Activated CD8-positive, alpha-beta T cell treated with anti-CD3 and anti-CD28 coated beads for 36 hours (primary cell): ENCODE measurements at regions of chr16 and their contacts with region 1.

Region 1: DNA sequence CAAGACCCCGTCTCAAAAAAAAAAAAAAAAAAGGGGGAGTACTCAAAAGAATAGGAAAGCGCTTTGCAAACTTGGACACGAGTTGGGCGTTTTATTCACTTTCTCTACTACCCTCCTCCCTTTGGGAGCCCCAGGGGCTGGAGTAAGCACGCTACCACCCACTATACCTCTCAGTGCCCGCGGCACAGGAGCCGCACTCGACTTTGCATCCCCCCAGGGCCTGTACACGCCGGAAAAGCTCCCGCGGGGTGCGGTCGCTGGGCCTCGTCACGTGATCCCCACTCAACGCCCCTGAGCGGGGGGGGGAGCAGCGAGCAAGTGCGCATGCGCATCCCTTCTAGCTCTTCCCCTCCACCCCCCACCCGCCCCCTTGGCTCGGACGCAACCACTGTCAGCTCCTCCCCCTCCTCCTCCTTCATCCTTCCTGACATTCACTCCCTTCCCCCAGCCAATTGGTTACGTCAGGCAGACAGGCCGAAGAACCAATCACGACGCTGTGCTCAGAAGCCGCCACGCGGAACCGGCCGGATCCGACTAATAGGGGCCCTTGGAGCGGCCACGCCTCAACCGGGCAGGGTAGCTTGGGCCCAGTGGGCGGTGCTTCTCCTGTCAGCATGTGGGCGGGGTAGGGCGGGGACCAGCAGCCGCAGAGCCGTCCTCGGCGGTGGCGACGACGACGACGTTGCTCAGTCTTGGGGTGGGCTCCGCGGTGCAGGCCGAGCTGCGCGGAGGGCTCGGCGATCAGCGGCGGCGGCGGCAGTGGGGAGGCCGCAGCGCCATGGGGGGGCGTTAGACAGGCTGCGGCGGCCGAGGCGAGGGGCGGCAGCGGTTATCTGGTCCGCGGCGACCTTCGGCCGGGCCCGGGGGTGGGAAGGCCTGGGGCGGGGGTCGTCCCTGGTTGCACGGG is at the start of gene HAPSTR1:
- DNase-seq: peak; percentile 100
- ATAC-seq: peak; percentile 91
- H3K4me3 Mint-ChIP-seq: peak within 1 kb of the TSS; percentile 88
- H3K27ac Mint-ChIP-seq: peak within 1 kb of the TSS; percentile 98
- H3K4me1 Mint-ChIP-seq: peaks cover 26% of the 10 kb centered on the region
- H3K27me3 Mint-ChIP-seq: no peaks in the 10 kb centered on the region
- CTCF ChIP-seq: no peak
- total RNA-seq, gene HAPSTR1: 52.5 to 53.4 TPM

Region 2: GRCh38 chr16:8868416-8869211 is 222.6 kb before region 1 on chr16 and contains the start of gene CARHSP1:
- CTCF ChIA-PET with region 1: no interaction called
- POLR2A ChIA-PET with region 1: interaction called, 15 read pairs
- intact Hi-C with region 1: no loop called
- DNase-seq: peak; percentile 87
- ATAC-seq: peak; percentile 79
- H3K4me3 Mint-ChIP-seq: peak within 1 kb of the TSS; percentile 93
- H3K27ac Mint-ChIP-seq: peak within 1 kb of the TSS; percentile 94
- H3K4me1 Mint-ChIP-seq: peaks cover 47% of the 10 kb centered on the region
- H3K27me3 Mint-ChIP-seq: no peaks in the 10 kb centered on the region
- CTCF ChIP-seq: no peak
- total RNA-seq, gene CARHSP1: 63.9 to 72.6 TPM

Region 3: GRCh38 chr16:8963825-8964441 is 127.3 kb before region 1 on chr16 and contains the start of gene USP7:
- CTCF ChIA-PET with region 1: interaction called, 3 read pairs
- POLR2A ChIA-PET with region 1: interaction called, 7 read pairs
- intact Hi-C with region 1: loop called (anchors 5 kb)
- DNase-seq: peak; percentile 94
- ATAC-seq: peak; percentile 92
- H3K4me3 Mint-ChIP-seq: peak within 1 kb of the TSS; percentile 83
- H3K27ac Mint-ChIP-seq: peak within 1 kb of the TSS; percentile 77
- H3K4me1 Mint-ChIP-seq: peaks cover 28% of the 10 kb centered on the region
- H3K27me3 Mint-ChIP-seq: no peaks in the 10 kb centered on the region
- CTCF ChIP-seq: no peak
- total RNA-seq, gene USP7: 155 to 163 TPM

Region 4: DNA sequence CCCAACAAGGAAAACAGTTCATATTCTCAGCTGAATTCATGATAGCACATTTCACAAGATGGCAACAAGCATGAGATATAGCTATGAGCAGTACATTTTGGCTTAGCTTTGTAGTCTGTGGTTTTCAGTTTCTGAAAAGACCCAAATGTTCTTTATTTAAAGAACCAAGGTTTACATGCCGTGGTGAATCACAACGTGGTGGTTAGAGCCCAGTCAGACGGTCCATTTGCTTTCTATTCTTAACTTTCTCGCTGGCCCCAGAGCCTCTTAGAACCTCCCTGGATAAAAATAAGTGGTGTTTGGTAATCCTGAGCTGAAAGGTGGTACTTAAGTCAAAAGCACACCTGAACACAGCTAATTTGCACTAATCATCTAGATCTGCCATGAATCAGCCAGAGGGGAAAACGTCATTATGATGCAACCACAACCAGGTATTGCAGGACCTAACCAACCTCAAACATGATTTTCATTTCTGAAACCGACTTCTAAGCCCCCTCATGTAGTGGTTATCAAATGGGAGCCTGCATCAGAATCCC is 18.3 kb before region 1 on chr16:
- CTCF ChIA-PET with region 1: interaction called, 6 read pairs
- POLR2A ChIA-PET with region 1: interaction called, 78 read pairs
- intact Hi-C with region 1: loop called (anchors 2 kb)
- DNase-seq: peak; percentile 74
- ATAC-seq: peak; percentile 62
- H3K4me3 Mint-ChIP-seq: peak overlapping the region; percentile 57
- H3K27ac Mint-ChIP-seq: peak overlapping the region; percentile 98
- H3K4me1 Mint-ChIP-seq: peaks cover 54% of the 10 kb centered on the region
- H3K27me3 Mint-ChIP-seq: peaks cover 2% of the 10 kb centered on the region
- CTCF ChIP-seq: no peak

Region 5: GRCh38 chr16:9123871-9124270 is 32.7 kb after region 1 on chr16:
- CTCF ChIA-PET with region 1: interaction called, 3 read pairs
- POLR2A ChIA-PET with region 1: interaction called, 26 read pairs
- intact Hi-C with region 1: loop called (anchors 5 kb)
- DNase-seq: peak; percentile 41
- ATAC-seq: no peak
- H3K4me3 Mint-ChIP-seq: no peak overlapping the region
- H3K27ac Mint-ChIP-seq: peak overlapping the region; percentile 66
- H3K4me1 Mint-ChIP-seq: peaks cover 79% of the 10 kb centered on the region
- H3K27me3 Mint-ChIP-seq: no peaks in the 10 kb centered on the region
- CTCF ChIP-seq: no peak

Region 6: DNA sequence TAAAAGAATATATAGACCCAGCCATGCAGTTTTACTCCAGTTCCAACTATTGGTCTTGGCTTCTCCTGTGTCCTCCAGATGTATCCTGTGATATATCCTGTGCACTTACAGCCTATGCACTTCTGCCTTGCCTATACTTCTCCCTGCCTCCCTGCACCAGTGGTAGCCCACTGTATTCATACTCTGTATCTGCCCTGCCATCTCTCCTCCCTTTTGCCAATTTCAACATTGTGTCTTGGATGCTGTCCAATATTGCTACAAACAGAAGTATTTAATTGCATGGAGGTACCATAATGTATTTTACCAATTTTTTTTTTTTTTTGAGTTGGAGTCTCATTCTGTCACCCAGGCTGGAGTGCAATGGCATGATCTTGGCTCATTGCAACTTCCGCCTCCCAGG is 242.9 kb after region 1 on chr16:
- CTCF ChIA-PET with region 1: no interaction called
- POLR2A ChIA-PET with region 1: no interaction called
- intact Hi-C with region 1: no loop called
- DNase-seq: no peak
- ATAC-seq: no peak
- H3K4me3 Mint-ChIP-seq: no peak overlapping the region
- H3K27ac Mint-ChIP-seq: no peak overlapping the region
- H3K4me1 Mint-ChIP-seq: no peaks in the 10 kb centered on the region
- H3K27me3 Mint-ChIP-seq: peaks cover 3% of the 10 kb centered on the region
- CTCF ChIP-seq: no peak